ENCODE measurements at regions of chr7 and their contacts with region 1.

Region 1: GRCh38 chr7:7772397-7772821 is 54.0 kb upstream of the RPA3 start:
- DNase-seq: peak; percentile 51
- ATAC-seq: peak; percentile 96
- H3K4me3 Mint-ChIP-seq: peak overlapping the region; percentile 43
- H3K27ac Mint-ChIP-seq: peak overlapping the region; percentile 69
- H3K4me1 Mint-ChIP-seq: peaks cover 28% of the 10 kb centered on the region
- H3K27me3 Mint-ChIP-seq: no peaks in the 10 kb centered on the region

Region 2: GRCh38 chr7:7786595-7786994 is 14.2 kb after region 1 on chr7:
- CTCF ChIA-PET with region 1: interaction called, 14 read pairs
- POLR2A ChIA-PET with region 1: no interaction called
- intact Hi-C with region 1: no loop called
- DNase-seq: no peak
- ATAC-seq: no peak
- H3K4me3 Mint-ChIP-seq: no peak overlapping the region
- H3K27ac Mint-ChIP-seq: no peak overlapping the region
- H3K4me1 Mint-ChIP-seq: peaks cover 3% of the 10 kb centered on the region
- H3K27me3 Mint-ChIP-seq: no peaks in the 10 kb centered on the region

Region 3: GRCh38 chr7:7816084-7816483 is 43.7 kb after region 1 on chr7:
- CTCF ChIA-PET with region 1: no interaction called
- POLR2A ChIA-PET with region 1: interaction called, 3 read pairs
- intact Hi-C with region 1: loop called in 1 of 2 experiments (anchors 5 kb)
- DNase-seq: no peak
- ATAC-seq: peak; percentile 27
- H3K4me3 Mint-ChIP-seq: no peak overlapping the region
- H3K27ac Mint-ChIP-seq: no peak overlapping the region
- H3K4me1 Mint-ChIP-seq: peaks cover 36% of the 10 kb centered on the region
- H3K27me3 Mint-ChIP-seq: no peaks in the 10 kb centered on the region

Region 4: DNA sequence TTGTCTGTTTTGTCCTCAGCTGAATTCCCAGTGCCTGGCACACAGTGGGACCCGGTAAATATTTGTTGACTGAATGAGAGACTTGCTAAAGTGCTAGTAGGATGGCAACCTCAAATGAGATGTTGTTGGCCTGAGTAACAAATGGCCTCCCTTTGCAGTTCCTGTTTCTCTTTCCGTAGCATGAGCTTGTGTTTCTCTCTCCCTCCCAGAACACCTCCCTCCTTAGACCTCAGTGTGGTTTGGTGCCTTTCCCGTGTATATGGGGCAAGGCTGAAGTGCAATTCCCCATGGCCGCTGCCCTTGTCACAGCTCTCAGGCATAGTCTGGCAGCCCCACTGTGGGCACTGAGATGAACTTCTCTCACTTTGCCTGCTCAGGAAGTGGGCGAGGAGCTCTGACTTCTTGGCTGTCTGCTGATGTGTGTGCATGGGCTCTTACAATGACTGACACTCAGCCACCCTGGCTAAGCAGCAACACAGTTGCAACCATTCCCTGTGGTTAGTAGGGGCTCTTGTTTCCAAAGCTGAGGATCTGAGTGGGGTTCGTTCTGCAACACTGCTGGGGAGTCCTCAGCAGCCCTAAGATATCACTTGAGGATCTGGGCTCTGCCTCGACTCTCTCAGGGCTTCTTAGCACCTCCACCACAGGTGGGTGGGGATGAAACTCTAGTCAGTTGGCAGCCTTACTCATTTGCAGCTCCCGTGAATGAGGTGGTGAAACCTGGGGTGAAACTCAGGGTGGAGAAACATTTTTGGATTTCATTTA is 353.5 kb after region 1 on chr7:
- CTCF ChIA-PET with region 1: no interaction called
- POLR2A ChIA-PET with region 1: no interaction called
- intact Hi-C with region 1: loop called (anchors 5 kb)
- DNase-seq: peak; percentile 88
- ATAC-seq: peak; percentile 93
- H3K4me3 Mint-ChIP-seq: peak overlapping the region; percentile 62
- H3K27ac Mint-ChIP-seq: peak overlapping the region; percentile 95
- H3K4me1 Mint-ChIP-seq: peaks cover 81% of the 10 kb centered on the region
- H3K27me3 Mint-ChIP-seq: peaks cover 5% of the 10 kb centered on the region

Measured in activated CD4-positive, alpha-beta T cell treated with anti-CD3 and anti-CD28 coated beads for 36 hours (primary cell).